ENCODE measurements at regions of chr14 and their contacts with region 1.

Region 1: GRCh38 chr14:92696366-92696765 is 52.1 kb downstream of the LGMN start:
- DNase-seq: no peak
- H3K4me3 Mint-ChIP-seq: no peak overlapping the region
- H3K27ac Mint-ChIP-seq: no peak overlapping the region
- H3K4me1 Mint-ChIP-seq: peaks cover 5% of the 10 kb centered on the region
- H3K27me3 Mint-ChIP-seq: peaks cover 9% of the 10 kb centered on the region

Region 2: GRCh38 chr14:92258934-92259333 is 437.4 kb before region 1 on chr14:
- CTCF ChIA-PET with region 1: interaction called, 10 read pairs
- POLR2A ChIA-PET with region 1: no interaction called
- DNase-seq: no peak
- H3K4me3 Mint-ChIP-seq: no peak overlapping the region
- H3K27ac Mint-ChIP-seq: no peak overlapping the region
- H3K4me1 Mint-ChIP-seq: peaks cover 17% of the 10 kb centered on the region
- H3K27me3 Mint-ChIP-seq: peaks cover 28% of the 10 kb centered on the region

Measured in activated CD4-positive, alpha-beta T cell treated with anti-CD3 and anti-CD28 coated beads, Interleukin-2, amount 10 ng/mL, durations not matched to agents 7 days and 5 days (primary cell).